ENCODE measurements at regions of chr14 and their contacts with region 1.

Region 1: GRCh38 chr14:59245809-59246295 is 57.4 kb downstream of the DAAM1 start:
- DNase-seq: peak; percentile 69
- ATAC-seq: peak; percentile 87
- H3K4me3 ChIP-seq: no peak overlapping the region
- H3K27ac ChIP-seq: peak overlapping the region; percentile 65
- H3K4me1 ChIP-seq: peaks cover 17% of the 10 kb centered on the region
- H3K27me3 ChIP-seq: no peaks in the 10 kb centered on the region
- CTCF ChIP-seq: no peak
- EP300 ChIP-seq: peak; percentile 58 to 64
- POLR2A ChIP-seq: no peak
- RAD21 ChIP-seq: no peak

Region 2: DNA sequence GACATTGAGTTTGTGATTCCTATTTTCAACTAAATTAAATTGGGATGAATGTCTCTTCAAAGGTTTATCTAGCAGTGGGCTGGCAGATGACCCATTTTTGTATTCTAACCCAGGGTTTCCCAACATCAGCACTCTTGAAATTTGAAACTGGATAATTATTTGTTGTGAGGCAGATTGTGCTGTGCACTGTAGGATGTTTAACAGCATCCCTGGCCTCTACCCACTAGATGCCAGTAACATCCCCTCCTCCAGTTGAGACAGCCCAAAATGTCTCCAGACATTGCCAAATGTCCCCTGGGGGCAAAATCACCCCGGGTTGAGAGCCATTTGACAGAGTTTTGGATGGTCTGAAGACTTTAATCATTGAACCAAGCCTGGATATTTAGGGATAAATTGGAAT is 46.2 kb before region 1 on chr14:
- CTCF ChIA-PET with region 1: interaction called, 6 read pairs
- POLR2A ChIA-PET with region 1: no interaction called
- RAD21 ChIA-PET with region 1: interaction called, 8 read pairs
- SMC1A ChIA-PET with region 1: interaction called, 11 read pairs
- in situ Hi-C with region 1: no loop called
- intact Hi-C with region 1: no loop called
- DNase-seq: no peak
- ATAC-seq: peak; percentile 27
- H3K4me3 ChIP-seq: no peak overlapping the region
- H3K27ac ChIP-seq: no peak overlapping the region
- H3K4me1 ChIP-seq: no peaks in the 10 kb centered on the region
- H3K27me3 ChIP-seq: no peaks in the 10 kb centered on the region
- CTCF ChIP-seq: no peak
- EP300 ChIP-seq: no peak
- POLR2A ChIP-seq: no peak
- RAD21 ChIP-seq: no peak

Region 3: DNA sequence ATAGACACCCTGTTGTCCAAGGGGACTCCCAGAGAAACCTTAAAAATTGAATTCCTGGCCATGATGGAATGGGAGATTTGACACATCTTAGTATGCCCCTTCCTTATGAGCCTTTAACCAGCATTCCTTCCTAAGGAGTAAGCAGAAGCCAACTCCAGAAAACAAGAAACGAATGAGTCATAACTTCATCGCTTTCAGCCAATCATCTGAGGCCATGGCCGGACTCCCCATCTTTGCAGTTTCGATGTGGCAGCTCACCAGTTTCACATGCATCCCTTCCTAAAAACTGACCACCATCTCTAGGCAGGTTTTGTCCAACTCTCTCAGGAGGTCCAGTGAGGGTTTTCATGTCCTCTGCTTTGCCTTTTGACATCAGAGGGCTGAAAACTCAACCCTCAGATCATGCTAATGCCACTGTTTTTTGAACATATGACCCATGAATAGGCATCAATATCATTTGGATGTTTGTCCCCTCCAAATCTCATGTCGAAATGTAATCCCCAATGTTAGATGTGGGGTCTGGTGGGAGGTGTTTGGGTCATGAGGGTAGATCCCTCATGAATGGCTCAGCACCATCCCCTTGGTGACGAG is 37.5 kb before region 1 on chr14:
- CTCF ChIA-PET with region 1: interaction called, 4 read pairs
- POLR2A ChIA-PET with region 1: interaction called, 8 read pairs
- RAD21 ChIA-PET with region 1: interaction called, 8 read pairs
- SMC1A ChIA-PET with region 1: interaction called, 24 read pairs
- in situ Hi-C with region 1: no loop called
- intact Hi-C with region 1: loop called (anchors 2 kb)
- DNase-seq: peak; percentile 65
- ATAC-seq: peak; percentile 84
- H3K4me3 ChIP-seq: no peak overlapping the region
- H3K27ac ChIP-seq: peak overlapping the region; percentile 62; the same call in 1 of the 2 replicates
- H3K4me1 ChIP-seq: peaks cover 8% of the 10 kb centered on the region; the same call in 1 of the 2 replicates
- H3K27me3 ChIP-seq: no peaks in the 10 kb centered on the region
- CTCF ChIP-seq: no peak
- EP300 ChIP-seq: no peak
- POLR2A ChIP-seq: no peak
- RAD21 ChIP-seq: no peak

Region 4: DNA sequence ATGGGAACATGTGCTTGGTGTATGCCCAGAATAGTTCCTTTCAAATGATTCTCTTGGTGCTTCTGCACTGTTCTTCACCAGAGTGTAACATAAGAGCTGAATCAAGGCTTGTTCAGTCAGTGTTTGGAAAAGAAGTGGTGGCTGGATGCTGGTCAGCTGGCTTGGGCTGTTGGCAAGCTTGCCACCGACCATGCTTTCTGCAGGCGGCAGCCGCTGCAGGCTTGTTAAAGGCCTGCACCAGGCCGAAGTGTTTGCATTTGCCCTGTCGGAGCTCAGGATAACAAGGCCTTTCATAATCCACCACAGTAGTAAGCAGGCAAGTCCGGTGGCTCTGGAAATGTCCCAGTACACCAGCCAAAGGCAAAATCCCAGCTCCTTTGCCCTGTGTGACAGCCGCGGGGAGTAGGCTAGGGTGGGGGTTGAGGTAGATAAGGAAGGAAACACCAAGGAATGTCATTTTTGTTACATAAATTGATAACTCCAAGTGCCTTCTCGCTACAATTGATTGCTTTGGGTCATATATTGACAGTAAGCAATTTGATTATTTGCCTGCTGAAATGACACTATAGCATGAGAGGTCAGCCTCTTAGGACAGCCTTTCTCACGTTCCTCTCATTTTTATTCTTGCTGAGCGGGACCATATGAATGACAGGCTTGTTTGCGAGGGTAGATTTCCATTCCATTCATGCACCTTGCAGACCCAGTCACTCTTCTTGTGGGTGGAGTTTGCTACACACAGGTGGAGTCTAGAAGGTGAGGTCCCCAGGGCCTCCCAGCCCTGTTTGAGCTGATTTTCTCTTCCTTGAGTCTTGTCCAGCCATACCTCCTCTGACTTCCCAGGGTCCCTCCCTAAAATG is 30.3 kb before region 1 on chr14:
- CTCF ChIA-PET with region 1: interaction called, 4 read pairs
- POLR2A ChIA-PET with region 1: interaction called, 6 read pairs
- RAD21 ChIA-PET with region 1: interaction called, 10 read pairs
- SMC1A ChIA-PET with region 1: interaction called, 24 read pairs
- in situ Hi-C with region 1: no loop called
- intact Hi-C with region 1: no loop called
- DNase-seq: no peak
- ATAC-seq: peak; percentile 19
- H3K4me3 ChIP-seq: 0 out of 2 replicates have a peak overlapping the region, but pooled peaks have one; percentile 11
- H3K27ac ChIP-seq: peak overlapping the region; percentile 59
- H3K4me1 ChIP-seq: peaks cover 15% of the 10 kb centered on the region
- H3K27me3 ChIP-seq: no peaks in the 10 kb centered on the region
- CTCF ChIP-seq: no peak
- EP300 ChIP-seq: no peak
- POLR2A ChIP-seq: no peak
- RAD21 ChIP-seq: no peak

Region 5: GRCh38 chr14:59398841-59399240 is 153.0 kb after region 1 on chr14:
- CTCF ChIA-PET with region 1: no interaction called
- POLR2A ChIA-PET with region 1: no interaction called
- RAD21 ChIA-PET with region 1: no interaction called
- SMC1A ChIA-PET with region 1: no interaction called
- in situ Hi-C with region 1: no loop called
- intact Hi-C with region 1: no loop called
- DNase-seq: no peak
- ATAC-seq: no peak
- H3K4me3 ChIP-seq: no peak overlapping the region
- H3K27ac ChIP-seq: no peak overlapping the region
- H3K4me1 ChIP-seq: no peaks in the 10 kb centered on the region
- H3K27me3 ChIP-seq: no peaks in the 10 kb centered on the region
- CTCF ChIP-seq: no peak
- EP300 ChIP-seq: no peak
- POLR2A ChIP-seq: no peak
- RAD21 ChIP-seq: no peak